ENCODE measurements at regions of chr15 and their contacts with region 1.

Region 1: GRCh38 chr15:38440353-38441129 is 13.4 kb upstream of the FAM98B start:
- DNase-seq: peak; percentile 49
- ATAC-seq: peak; percentile 88 to 94
- H3K4me3 ChIP-seq: no peak overlapping the region
- H3K27ac ChIP-seq: no peak overlapping the region
- H3K4me1 ChIP-seq: no peaks in the 10 kb centered on the region
- H3K27me3 ChIP-seq: peaks cover 6% of the 10 kb centered on the region
- CTCF ChIP-seq: peak; percentile 94

Region 2: GRCh38 chr15:38252481-38253412 is 187.8 kb before region 1 on chr15 and contains the start of gene SPRED1:
- intact Hi-C with region 1: no loop called
- DNase-seq: peak; percentile 82
- ATAC-seq: peak; percentile 81 to 84
- H3K4me3 ChIP-seq: peak within 1 kb of the TSS; percentile 84
- H3K27ac ChIP-seq: peak within 1 kb of the TSS; percentile 96
- H3K4me1 ChIP-seq: peaks cover 40% of the 10 kb centered on the region
- H3K27me3 ChIP-seq: no peaks in the 10 kb centered on the region
- CTCF ChIP-seq: no peak
- total RNA-seq, gene SPRED1: 57.7 TPM

Region 3: GRCh38 chr15:38576837-38577236 is 136.3 kb after region 1 on chr15:
- intact Hi-C with region 1: no loop called
- DNase-seq: no peak
- ATAC-seq: peak in 1 of 2 donors; percentile 37
- H3K4me3 ChIP-seq: no peak overlapping the region
- H3K27ac ChIP-seq: no peak overlapping the region
- H3K4me1 ChIP-seq: no peaks in the 10 kb centered on the region
- H3K27me3 ChIP-seq: no peaks in the 10 kb centered on the region
- CTCF ChIP-seq: no peak

Region 4: GRCh38 chr15:38699633-38700230 is 259.2 kb after region 1 on chr15:
- intact Hi-C with region 1: loop called (anchors 10 kb)
- DNase-seq: peak; percentile 53
- ATAC-seq: peak; percentile 68 to 73
- H3K4me3 ChIP-seq: no peak overlapping the region
- H3K27ac ChIP-seq: no peak overlapping the region
- H3K4me1 ChIP-seq: peaks cover 5% of the 10 kb centered on the region
- H3K27me3 ChIP-seq: no peaks in the 10 kb centered on the region
- CTCF ChIP-seq: peak; percentile 83